Endothelial cell of umbilical vein (primary cell): ENCODE measurements at regions of chr10 and their contacts with region 1.

Region 1: GRCh38 chr10:3071405-3072198 is 4.3 kb downstream of the PFKP start:
- DNase-seq: peak; percentile 95
- H3K4me3 ChIP-seq: no peak overlapping the region
- H3K27ac ChIP-seq: peak overlapping the region; percentile 63
- H3K4me1 ChIP-seq: peaks cover 40% of the 10 kb centered on the region
- H3K27me3 ChIP-seq: no peaks in the 10 kb centered on the region
- CTCF ChIP-seq: no peak
- POLR2A ChIP-seq: no peak

Region 2: GRCh38 chr10:2340831-2341647 is 730.6 kb before region 1 on chr10:
- CTCF ChIA-PET with region 1: no interaction called
- POLR2A ChIA-PET with region 1: no interaction called
- dilution Hi-C with region 1: no loop called
- intact Hi-C with region 1: no loop called
- DNase-seq: no peak
- H3K4me3 ChIP-seq: no peak overlapping the region
- H3K27ac ChIP-seq: no peak overlapping the region
- H3K4me1 ChIP-seq: no peaks in the 10 kb centered on the region
- H3K27me3 ChIP-seq: no peaks in the 10 kb centered on the region
- CTCF ChIP-seq: no peak
- POLR2A ChIP-seq: no peak

Region 3: GRCh38 chr10:3085785-3086567 is 14.4 kb after region 1 on chr10:
- CTCF ChIA-PET with region 1: interaction called, 14 read pairs
- POLR2A ChIA-PET with region 1: interaction called, 11 read pairs
- dilution Hi-C with region 1: no loop called
- intact Hi-C with region 1: loop called (anchors 1 kb)
- DNase-seq: peak; percentile 44
- H3K4me3 ChIP-seq: no peak overlapping the region
- H3K27ac ChIP-seq: peak overlapping the region; percentile 70
- H3K4me1 ChIP-seq: peaks cover 37% of the 10 kb centered on the region
- H3K27me3 ChIP-seq: no peaks in the 10 kb centered on the region
- CTCF ChIP-seq: no peak
- POLR2A ChIP-seq: no peak

Region 4: DNA sequence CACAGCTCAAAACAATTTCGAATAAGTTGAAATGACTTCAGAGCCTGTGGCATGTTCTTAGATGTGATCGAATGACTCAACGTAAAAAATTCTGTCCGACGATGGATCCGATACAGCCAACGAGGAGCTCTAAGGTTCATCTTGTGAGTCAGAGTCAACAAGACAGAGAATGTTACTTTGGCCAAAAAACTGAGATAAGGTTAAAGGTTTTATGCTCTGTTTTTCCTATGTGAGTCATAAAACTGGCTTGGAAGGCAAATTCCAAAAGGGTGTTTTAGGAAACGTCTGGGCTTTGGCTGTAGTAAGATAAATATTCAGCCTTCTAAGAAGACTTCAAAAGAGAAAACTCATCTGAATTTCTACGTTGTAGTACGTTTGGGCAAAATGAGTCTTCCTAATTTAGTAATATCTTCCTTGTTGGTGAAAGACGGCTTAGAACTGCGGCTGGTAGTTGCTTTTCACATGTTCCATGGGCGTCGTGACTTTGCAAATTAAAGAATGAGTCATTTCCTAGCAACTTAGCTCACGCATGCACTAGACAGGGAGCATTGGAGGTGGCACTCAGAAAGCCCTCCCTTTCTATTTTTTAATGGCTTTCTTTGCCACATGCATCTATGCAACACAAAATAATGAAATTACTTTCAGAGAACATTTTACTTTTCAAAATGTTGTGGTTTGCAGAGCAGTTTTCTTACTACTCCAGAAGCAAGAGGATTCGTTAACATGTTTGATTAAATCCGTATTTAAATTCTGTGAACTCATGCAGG is 24.0 kb after region 1 on chr10:
- CTCF ChIA-PET with region 1: interaction called, 14 read pairs
- POLR2A ChIA-PET with region 1: interaction called, 10 read pairs
- dilution Hi-C with region 1: no loop called
- intact Hi-C with region 1: loop called (anchors 1 kb)
- DNase-seq: peak; percentile 98
- H3K4me3 ChIP-seq: peak overlapping the region in 1 of 3 experiments; percentile 43
- H3K27ac ChIP-seq: peak overlapping the region; percentile 100
- H3K4me1 ChIP-seq: peaks cover 65% of the 10 kb centered on the region
- H3K27me3 ChIP-seq: no peaks in the 10 kb centered on the region
- CTCF ChIP-seq: no peak
- POLR2A ChIP-seq: peak; percentile 69

Region 5: DNA sequence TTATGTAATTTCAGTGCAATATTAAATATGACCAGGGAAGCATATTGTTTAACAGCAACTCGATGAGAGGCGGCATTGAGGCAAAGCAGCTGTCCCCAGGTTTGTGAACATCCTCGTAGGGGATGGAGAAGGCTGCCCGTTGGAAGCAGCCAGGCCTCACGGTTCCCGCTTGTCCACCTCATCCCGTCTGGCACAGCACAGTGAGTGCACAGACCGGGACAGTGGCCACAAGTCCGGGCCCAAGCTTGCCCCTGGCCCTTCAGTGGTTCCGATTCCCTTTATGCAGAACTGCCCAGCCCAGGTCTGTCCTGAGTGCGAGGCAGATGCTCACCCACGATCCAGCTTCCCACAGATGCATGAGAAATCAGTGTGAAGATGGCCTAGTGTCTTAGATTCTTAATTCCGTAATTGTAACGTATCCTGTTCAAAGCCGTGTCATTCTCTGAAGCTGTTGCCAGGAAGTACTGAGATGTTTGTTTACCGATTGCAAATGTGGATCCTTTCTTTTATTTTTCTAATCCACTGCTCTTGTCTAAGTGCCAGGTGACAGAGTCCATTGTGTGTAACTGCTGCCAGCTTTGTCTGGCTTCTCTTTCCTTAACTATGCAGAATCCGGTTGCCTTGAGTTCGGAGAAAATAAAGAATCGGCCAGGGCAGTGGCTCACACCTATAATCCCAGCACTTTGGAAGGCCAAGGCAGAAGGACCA is 31.3 kb after region 1 on chr10:
- CTCF ChIA-PET with region 1: interaction called, 5 read pairs
- POLR2A ChIA-PET with region 1: no interaction called
- dilution Hi-C with region 1: no loop called
- intact Hi-C with region 1: loop called (anchors 2 kb)
- DNase-seq: peak; percentile 93
- H3K4me3 ChIP-seq: no peak overlapping the region
- H3K27ac ChIP-seq: peak overlapping the region; percentile 96
- H3K4me1 ChIP-seq: peaks cover 14% of the 10 kb centered on the region
- H3K27me3 ChIP-seq: no peaks in the 10 kb centered on the region
- CTCF ChIP-seq: no peak
- POLR2A ChIP-seq: no peak